ENCODE measurements at regions of chr1 and their contacts with region 1.

Region 1: GRCh38 chr1:1858382-1859086 is 32.4 kb downstream of the GNB1 start:
- DNase-seq: peak; percentile 59 to 75 (median 65)
- H3K4me3 ChIP-seq: peak overlapping the region in 1 of 3 experiments; percentile 22
- H3K4me3 Mint-ChIP-seq: peak overlapping the region in 1 of 2 donors; percentile 11
- H3K27ac ChIP-seq: peak overlapping the region; percentile 30 to 66
- H3K27ac Mint-ChIP-seq: peak overlapping the region; percentile 71 to 89 (median 84)
- H3K4me1 ChIP-seq: peaks cover 63 to 64% of the 10 kb centered on the region in 2 donors
- H3K4me1 Mint-ChIP-seq: peaks cover 73% of the 10 kb centered on the region
- H3K27me3 ChIP-seq: no peaks in the 10 kb centered on the region
- H3K27me3 Mint-ChIP-seq: no peaks in the 10 kb centered on the region
- CTCF ChIP-seq: no peak

Region 2: GRCh38 chr1:1890506-1891348 is 32.2 kb after region 1 on chr1 and contains the start of gene GNB1:
- intact Hi-C with region 1: loop called in 1 of 2 experiments (anchors 5 kb)
- DNase-seq: peak; percentile 85 to 92 (median 89)
- H3K4me3 ChIP-seq: peak within 1 kb of the TSS; percentile 76 to 98 (median 89)
- H3K4me3 Mint-ChIP-seq: peak within 1 kb of the TSS; percentile 87 to 89
- H3K27ac ChIP-seq: peak within 1 kb of the TSS; percentile 76 to 91
- H3K27ac Mint-ChIP-seq: peak within 1 kb of the TSS; percentile 83 to 93 (median 88)
- H3K4me1 ChIP-seq: peaks cover 34 to 45% of the 10 kb centered on the region in 2 donors
- H3K4me1 Mint-ChIP-seq: peaks cover 53% of the 10 kb centered on the region
- H3K27me3 ChIP-seq: peaks cover 0 to 6% of the 10 kb centered on the region in 2 donors
- H3K27me3 Mint-ChIP-seq: peaks cover 9 to 18% (median 16%) of the 10 kb centered on the region in 3 donors
- CTCF ChIP-seq: no peak
- polyA plus RNA-seq, gene GNB1: 41.9 to 357 (median 111) TPM

Region 3: DNA sequence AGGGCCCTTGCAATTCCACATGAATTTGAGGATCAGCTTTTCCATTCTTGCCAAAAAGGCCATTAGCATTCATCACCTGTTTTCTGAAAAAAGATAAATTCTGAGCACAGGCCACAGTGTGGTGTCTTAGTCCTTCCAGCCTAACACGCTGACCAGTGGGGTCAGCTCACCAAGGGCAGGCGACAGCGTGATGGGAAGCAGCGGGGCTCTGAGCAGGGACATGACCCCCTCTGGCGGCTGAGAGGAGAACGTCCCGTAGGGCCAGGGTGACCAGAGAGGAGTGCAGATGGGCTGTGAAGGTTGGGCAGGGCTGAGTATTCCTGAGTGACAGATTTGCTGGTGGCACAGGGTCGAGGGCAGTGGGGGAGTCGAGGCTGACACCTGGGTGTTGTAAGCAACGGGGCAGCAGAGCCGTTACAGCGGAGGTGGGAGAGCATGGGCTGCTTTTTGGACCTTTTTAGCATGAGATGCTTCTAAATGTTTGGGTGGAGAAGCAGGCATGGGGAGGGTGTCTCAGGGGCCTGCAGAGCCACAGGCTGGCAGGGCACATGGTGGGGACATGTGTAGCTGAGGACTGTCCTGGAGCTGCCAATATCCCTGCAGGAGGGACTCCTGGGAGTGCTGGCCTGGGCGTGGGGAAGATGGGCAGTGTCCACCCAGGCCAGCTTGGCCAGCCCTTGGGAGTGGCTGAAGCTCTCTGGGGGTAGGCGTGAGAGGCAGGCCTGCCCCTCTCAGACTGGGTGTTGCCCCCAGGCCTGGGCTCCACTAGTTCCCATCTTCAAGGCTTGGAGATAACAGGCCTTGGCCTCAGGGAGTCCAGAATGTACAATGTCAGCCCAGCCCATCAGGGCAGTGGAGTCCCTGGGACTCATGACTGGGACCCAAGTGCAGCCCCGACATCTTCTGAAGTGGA is 47.9 kb after region 1 on chr1:
- intact Hi-C with region 1: loop called in 1 of 2 experiments (anchors 5 kb)
- DNase-seq: peak; percentile 80 to 85 (median 81)
- H3K4me3 ChIP-seq: no peak overlapping the region
- H3K4me3 Mint-ChIP-seq: peak overlapping the region in 1 of 2 donors; percentile 17
- H3K27ac ChIP-seq: no peak overlapping the region
- H3K27ac Mint-ChIP-seq: peak overlapping the region in 4 of 7 donors; percentile 35 to 80 (median 50)
- H3K4me1 ChIP-seq: peaks cover 13 to 17% of the 10 kb centered on the region in 2 donors
- H3K4me1 Mint-ChIP-seq: peaks cover 14% of the 10 kb centered on the region
- H3K27me3 ChIP-seq: peaks cover 0 to 5% of the 10 kb centered on the region in 2 donors
- H3K27me3 Mint-ChIP-seq: peaks cover 3 to 7% (median 6%) of the 10 kb centered on the region in 3 donors
- CTCF ChIP-seq: peak; percentile 84